Activated B cell treated with CpG ODN at 0.5 μM for 24 hours (primary cell): ENCODE measurements at regions of chr9 and their contacts with region 1.

Region 1: GRCh38 chr9:92634712-92635605 is 35.0 kb downstream of the IPPK start:
- DNase-seq: peak; percentile 41
- ATAC-seq: peak; percentile 81
- H3K4me3 Mint-ChIP-seq: no peak overlapping the region
- H3K27ac Mint-ChIP-seq: no peak overlapping the region
- H3K4me1 Mint-ChIP-seq: no peaks in the 10 kb centered on the region
- H3K27me3 Mint-ChIP-seq: no peaks in the 10 kb centered on the region
- CTCF ChIP-seq: no peak

Region 2: GRCh38 chr9:92133949-92134604 is 500.9 kb before region 1 on chr9:
- CTCF ChIA-PET with region 1: interaction called, 18 read pairs
- POLR2A ChIA-PET with region 1: no interaction called
- intact Hi-C with region 1: loop called (anchors 1 kb)
- DNase-seq: peak; percentile 54
- ATAC-seq: peak; percentile 80
- H3K4me3 Mint-ChIP-seq: no peak overlapping the region
- H3K27ac Mint-ChIP-seq: no peak overlapping the region
- H3K4me1 Mint-ChIP-seq: peaks cover 8% of the 10 kb centered on the region
- H3K27me3 Mint-ChIP-seq: peaks cover 50% of the 10 kb centered on the region
- CTCF ChIP-seq: peak; percentile 31

Region 3: GRCh38 chr9:92393686-92394085 is 241.3 kb before region 1 on chr9:
- CTCF ChIA-PET with region 1: no interaction called
- POLR2A ChIA-PET with region 1: no interaction called
- intact Hi-C with region 1: no loop called
- DNase-seq: no peak
- ATAC-seq: no peak
- H3K4me3 Mint-ChIP-seq: no peak overlapping the region
- H3K27ac Mint-ChIP-seq: no peak overlapping the region
- H3K4me1 Mint-ChIP-seq: no peaks in the 10 kb centered on the region
- H3K27me3 Mint-ChIP-seq: no peaks in the 10 kb centered on the region
- CTCF ChIP-seq: no peak